OCI-LY7 (cell line): ENCODE measurements at regions of chr2 and their contacts with region 1.

Region 1: DNA sequence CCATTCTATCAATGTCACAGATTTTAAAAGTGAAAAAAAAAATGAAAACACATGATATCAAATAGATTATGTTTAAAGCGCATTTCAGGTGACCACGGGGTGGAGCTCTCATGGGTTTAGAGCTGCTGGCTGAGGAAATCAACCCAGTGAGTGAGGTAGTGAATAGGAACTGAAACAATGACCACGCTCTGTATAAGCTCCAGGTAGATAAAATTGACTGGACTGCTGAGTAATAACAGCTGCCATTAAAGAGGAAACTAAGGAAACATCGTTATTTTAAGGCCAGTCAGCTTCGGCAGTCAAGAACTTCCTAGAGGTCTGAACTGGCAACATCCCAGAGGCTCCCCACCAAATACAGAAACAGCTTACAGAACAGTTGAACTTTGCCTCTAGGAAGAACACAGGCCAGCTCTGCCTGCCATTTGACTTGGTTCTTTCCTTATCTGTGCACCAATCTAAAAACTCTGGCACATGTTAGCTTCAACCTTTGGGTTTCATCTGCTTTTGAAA is 185.9 kb downstream of the PDE1A start:
- DNase-seq: peak; percentile 54
- H3K4me3 ChIP-seq: no peak overlapping the region
- H3K27ac ChIP-seq: no peak overlapping the region
- H3K4me1 ChIP-seq: no peaks in the 10 kb centered on the region
- CTCF ChIP-seq: peak; percentile 89

Region 2: DNA sequence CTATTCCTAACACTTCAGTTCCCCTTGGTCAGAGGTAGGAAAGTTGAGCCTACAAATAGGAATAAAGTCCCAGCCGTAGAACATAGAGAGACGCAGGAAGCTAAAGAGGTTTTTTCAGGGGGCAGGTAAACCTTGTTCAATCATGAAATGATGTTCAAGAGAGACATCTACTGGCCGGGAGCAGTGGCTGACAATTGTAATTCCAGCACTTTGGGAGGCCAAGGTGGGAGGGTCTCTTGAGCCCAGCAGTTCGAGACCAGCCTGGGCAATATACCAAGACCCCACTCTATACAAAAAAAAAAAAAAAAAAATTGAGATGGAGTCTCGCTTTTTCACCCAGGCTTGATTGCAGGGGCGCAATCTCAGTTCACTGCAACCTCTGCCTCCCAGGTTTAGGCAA is 408.4 kb after region 1 on chr2:
- CTCF ChIA-PET with region 1: interaction called, 6 read pairs
- POLR2A ChIA-PET with region 1: no interaction called
- intact Hi-C with region 1: loop called (anchors 1 kb)
- DNase-seq: peak; percentile 26
- H3K4me3 ChIP-seq: no peak overlapping the region
- H3K27ac ChIP-seq: no peak overlapping the region
- H3K4me1 ChIP-seq: no peaks in the 10 kb centered on the region
- CTCF ChIP-seq: peak; percentile 72